ENCODE measurements at regions of chr12 and their contacts with region 1.

Region 1: GRCh38 chr12:76790564-76791552 is 26.9 kb downstream of the ZDHHC17 start:
- DNase-seq: no peak
- H3K4me3 Mint-ChIP-seq: no peak overlapping the region
- H3K27ac Mint-ChIP-seq: no peak overlapping the region
- H3K4me1 Mint-ChIP-seq: peaks cover 6% of the 10 kb centered on the region
- H3K27me3 Mint-ChIP-seq: no peaks in the 10 kb centered on the region

Region 2: DNA sequence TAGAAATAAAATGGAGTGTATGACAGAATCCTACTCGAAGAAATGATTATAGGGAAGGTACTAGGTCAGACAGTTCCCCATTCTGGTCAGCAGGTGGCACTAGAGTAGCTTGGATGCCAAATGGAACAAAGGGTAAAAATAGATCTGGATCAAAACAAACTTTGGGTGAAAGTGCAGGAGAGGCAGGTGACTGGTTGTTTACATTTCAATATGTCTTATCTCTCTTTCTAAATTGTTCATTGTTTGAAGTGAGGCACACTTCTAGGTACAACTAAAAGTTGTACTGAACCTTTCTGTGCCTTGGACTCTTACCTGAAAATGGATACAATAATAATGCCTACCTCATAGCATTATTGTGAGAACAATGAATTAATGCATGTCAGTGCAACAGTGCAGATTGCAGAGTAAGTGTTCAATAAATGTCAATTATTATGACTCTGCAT is 169.3 kb before region 1 on chr12:
- intact Hi-C with region 1: loop called (anchors 1 kb)
- DNase-seq: peak; percentile 44
- H3K4me3 Mint-ChIP-seq: no peak overlapping the region
- H3K27ac Mint-ChIP-seq: no peak overlapping the region
- H3K4me1 Mint-ChIP-seq: peaks cover 7% of the 10 kb centered on the region
- H3K27me3 Mint-ChIP-seq: peaks cover 8% of the 10 kb centered on the region

Region 3: DNA sequence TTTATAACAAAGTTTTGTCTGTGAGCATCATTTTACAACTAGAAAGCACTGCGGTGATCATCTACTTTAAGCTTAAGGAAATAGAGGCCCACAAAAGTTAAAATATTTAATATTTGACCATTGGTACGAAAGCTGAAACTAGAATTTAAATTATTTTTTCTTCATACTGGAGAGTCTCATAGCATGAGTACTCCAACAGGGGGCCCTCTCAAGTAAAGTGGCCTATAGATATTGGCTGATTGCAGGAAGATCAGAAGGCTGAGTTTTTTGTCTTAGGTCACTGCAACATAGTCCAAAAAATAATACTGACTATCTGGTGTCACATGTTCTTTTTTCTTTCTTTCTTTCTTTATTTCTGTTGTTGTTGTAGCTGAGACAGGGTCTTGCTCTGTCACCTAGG is 102.2 kb before region 1 on chr12:
- intact Hi-C with region 1: loop called (anchors 1 kb)
- DNase-seq: no peak
- H3K4me3 Mint-ChIP-seq: no peak overlapping the region
- H3K27ac Mint-ChIP-seq: no peak overlapping the region
- H3K4me1 Mint-ChIP-seq: no peaks in the 10 kb centered on the region
- H3K27me3 Mint-ChIP-seq: no peaks in the 10 kb centered on the region

Region 4: DNA sequence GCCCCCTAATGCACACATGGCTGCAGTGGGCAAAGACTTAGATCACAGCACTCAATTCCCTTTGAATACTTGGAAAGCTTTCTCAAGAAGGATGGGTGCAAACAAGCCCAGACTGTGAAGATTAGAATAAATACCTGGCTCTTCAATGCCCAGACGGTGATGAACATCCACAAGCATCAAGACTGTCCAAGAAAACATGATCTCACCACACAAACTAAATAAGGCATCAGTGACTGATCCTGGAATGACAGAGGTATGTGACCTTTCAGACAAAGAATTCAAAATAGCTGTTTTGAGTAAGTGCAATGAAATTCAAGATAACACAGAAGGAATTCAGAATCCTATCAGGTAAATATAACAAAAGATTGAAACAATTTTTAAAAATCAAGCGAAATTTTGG is 70.8 kb before region 1 on chr12:
- intact Hi-C with region 1: no loop called
- DNase-seq: no peak
- H3K4me3 Mint-ChIP-seq: no peak overlapping the region
- H3K27ac Mint-ChIP-seq: no peak overlapping the region
- H3K4me1 Mint-ChIP-seq: no peaks in the 10 kb centered on the region
- H3K27me3 Mint-ChIP-seq: peaks cover 4% of the 10 kb centered on the region

Region 5: DNA sequence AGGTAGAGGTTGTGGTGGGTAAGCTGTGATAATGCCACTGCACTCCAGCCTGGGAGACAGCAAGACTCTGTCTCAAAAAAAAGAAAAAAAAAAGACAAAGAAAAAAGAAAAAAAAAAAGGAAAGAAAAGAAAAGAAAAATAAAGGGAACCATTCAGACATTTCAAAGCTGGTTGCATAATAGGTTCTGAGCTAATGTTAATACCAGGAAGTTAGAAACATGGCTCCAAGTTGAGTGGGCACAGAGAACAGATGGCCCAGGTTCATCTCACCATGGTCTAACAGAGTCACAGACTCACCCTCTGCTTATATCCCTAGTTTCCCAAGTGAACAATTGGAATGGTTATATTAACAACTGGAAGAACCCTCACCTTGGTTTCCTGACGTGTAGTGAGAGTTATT is 44.3 kb before region 1 on chr12:
- intact Hi-C with region 1: no loop called
- DNase-seq: no peak
- H3K4me3 Mint-ChIP-seq: no peak overlapping the region
- H3K27ac Mint-ChIP-seq: no peak overlapping the region
- H3K4me1 Mint-ChIP-seq: no peaks in the 10 kb centered on the region
- H3K27me3 Mint-ChIP-seq: peaks cover 3% of the 10 kb centered on the region

Region 6: DNA sequence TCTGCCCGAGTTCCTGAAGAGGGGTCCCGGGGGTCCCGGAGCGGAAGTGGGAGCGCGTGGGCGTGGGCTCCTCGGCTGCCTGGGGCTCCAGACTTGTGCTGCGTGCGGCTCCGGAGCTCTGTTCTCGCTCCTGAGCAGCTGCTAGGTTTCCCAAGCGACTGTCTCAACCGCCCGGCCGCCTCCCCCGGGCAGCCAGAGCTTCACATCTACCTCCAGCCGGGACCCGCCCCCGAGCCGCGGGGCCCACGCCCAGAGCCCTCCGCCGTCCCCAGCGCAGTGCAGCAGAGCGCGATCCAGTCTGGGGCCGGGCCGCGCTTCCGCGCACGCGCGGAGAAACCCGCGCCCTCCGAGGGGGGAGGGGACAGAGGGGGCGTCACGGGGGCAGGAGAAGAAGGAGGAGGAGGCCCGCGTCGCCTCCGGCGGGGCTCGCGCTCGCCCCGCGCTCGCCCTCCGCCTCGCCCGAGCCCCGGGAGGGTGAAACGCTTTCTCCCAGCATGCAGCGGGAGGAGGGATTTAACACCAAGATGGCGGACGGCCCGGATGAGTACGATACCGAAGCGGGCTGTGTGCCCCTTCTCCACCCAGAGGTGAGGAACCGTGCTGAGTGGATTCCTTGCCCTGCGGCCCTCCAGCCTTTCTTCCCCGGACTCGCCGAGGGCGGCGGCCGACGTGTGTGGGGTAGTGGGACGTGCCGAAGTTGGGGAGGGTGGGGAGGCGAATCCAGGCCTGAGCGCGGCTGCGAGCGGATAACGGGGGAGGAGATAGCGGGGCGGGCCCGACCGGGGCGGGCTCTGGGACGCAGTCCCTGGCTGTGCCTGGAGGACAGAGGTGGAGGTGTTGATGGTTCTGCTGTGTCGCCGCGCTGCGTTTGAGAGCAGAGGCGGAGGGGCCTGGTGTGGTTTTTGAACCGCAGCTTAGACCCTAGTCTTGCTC is 26.8 kb before region 1 on chr12 and contains the start of gene ZDHHC17:
- intact Hi-C with region 1: loop called (anchors 1 kb)
- DNase-seq: peak; percentile 91
- H3K4me3 Mint-ChIP-seq: peak within 1 kb of the TSS; percentile 98
- H3K27ac Mint-ChIP-seq: peak within 1 kb of the TSS; percentile 94
- H3K4me1 Mint-ChIP-seq: peaks cover 19% of the 10 kb centered on the region
- H3K27me3 Mint-ChIP-seq: peaks cover 3% of the 10 kb centered on the region
- total RNA-seq, gene ZDHHC17: 23.3 and 32.3 TPM in 2 replicates

Region 7: DNA sequence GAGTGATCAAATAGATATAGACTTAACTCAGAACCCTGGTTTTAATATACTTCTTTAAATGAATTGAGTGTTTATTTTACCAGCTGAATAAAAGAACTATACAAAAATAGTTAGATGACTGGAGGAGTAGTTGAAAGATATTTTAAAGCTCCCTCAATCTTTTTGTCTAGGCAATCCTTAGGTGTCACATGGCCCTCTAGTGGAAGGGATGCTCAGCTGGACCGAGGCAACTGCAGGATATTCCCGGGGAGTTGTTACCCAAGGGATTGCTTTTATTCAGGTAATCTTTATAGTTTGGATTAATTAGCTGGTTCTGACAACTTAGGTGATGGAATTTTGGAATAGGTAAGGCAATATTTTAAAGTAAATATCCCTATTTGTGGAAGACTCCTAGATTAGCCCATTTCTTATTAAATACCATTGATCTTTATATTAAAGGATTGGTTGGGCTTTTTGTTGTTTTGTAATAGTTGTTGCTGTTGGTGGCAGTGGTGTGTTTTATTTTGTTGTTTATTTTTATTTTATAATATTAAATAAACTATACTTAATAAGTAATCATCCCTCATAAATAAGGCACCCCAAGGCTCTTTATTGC is 30.1 kb after region 1 on chr12:
- intact Hi-C with region 1: no loop called
- DNase-seq: no peak
- H3K4me3 Mint-ChIP-seq: no peak overlapping the region
- H3K27ac Mint-ChIP-seq: no peak overlapping the region
- H3K4me1 Mint-ChIP-seq: no peaks in the 10 kb centered on the region
- H3K27me3 Mint-ChIP-seq: no peaks in the 10 kb centered on the region

Region 8: GRCh38 chr12:76927170-76927784 is 136.4 kb after region 1 on chr12:
- intact Hi-C with region 1: loop called (anchors 5 kb)
- DNase-seq: no peak
- H3K4me3 Mint-ChIP-seq: no peak overlapping the region
- H3K27ac Mint-ChIP-seq: no peak overlapping the region
- H3K4me1 Mint-ChIP-seq: no peaks in the 10 kb centered on the region
- H3K27me3 Mint-ChIP-seq: no peaks in the 10 kb centered on the region

Region 9: GRCh38 chr12:76990716-76991115 is 199.9 kb after region 1 on chr12:
- intact Hi-C with region 1: no loop called
- DNase-seq: no peak
- H3K4me3 Mint-ChIP-seq: no peak overlapping the region
- H3K27ac Mint-ChIP-seq: no peak overlapping the region
- H3K4me1 Mint-ChIP-seq: no peaks in the 10 kb centered on the region
- H3K27me3 Mint-ChIP-seq: no peaks in the 10 kb centered on the region

Region 10: DNA sequence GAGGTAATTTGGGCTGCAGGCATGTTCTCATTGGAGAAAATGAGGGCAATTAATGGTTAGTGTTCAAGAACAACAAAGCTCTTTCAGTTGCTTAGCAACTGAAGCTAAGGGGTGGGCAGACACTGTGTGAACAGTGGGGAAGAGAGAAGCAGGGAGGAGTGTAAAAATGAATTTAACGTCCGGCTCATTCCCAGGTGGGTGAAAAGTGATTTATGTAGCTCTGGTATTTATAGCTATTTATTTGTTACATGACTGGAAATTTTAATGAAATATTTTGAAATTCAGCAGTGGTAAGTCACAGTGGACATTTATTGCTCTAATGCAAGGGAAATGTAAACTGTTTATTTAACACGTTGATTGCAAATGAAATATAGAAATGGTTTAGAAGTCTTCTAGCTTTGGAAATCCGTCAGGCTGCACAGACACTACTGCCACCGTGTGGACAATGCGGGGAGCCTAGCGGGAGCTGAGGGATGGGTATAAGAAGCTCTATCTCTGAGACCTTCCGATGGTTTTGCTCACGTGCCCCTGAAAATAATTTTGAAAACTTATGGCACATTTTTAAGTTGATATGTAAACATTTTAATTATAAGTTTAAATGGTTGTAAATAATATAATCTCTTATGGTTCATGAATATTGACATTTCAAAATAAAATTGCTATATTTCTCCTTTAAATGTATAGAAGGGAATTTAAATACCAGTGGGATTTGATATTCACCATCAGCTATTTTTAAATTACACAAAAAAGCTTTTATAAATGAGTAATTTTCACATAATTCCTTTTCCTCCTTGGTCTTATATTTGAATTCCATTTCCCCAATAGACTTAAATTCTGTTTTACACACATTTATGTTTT is 220.1 kb after region 1 on chr12:
- intact Hi-C with region 1: loop called (anchors 1 kb)
- DNase-seq: peak; percentile 42
- H3K4me3 Mint-ChIP-seq: no peak overlapping the region
- H3K27ac Mint-ChIP-seq: no peak overlapping the region
- H3K4me1 Mint-ChIP-seq: peaks cover 5% of the 10 kb centered on the region
- H3K27me3 Mint-ChIP-seq: peaks cover 27% of the 10 kb centered on the region

Measured in activated T-helper 1 cell treated with anti-CD3 and anti-CD28 coated beads, Interleukin-12 subunit alpha, Interleukin-12 subunit beta, Interleukin-2, Interleukin-4 antibody, amounts not matched to agents 30 ng/mL and 10 ng/mL and 1 ng/mL, durations not matched to agents 14 hours and 24 hours and 36 hours (primary cell).